HEK293 (cell line): ENCODE measurements at regions of chr5 and their contacts with region 1.

Region 1: GRCh38 chr5:140690941-140691924 is at the starts of genes HARS1 and HARS2:
- H3K4me3 ChIP-seq: peak within 1 kb of the TSS; percentile 72
- H3K27ac ChIP-seq: peak within 1 kb of the TSS; percentile 75
- H3K4me1 ChIP-seq: 0 out of 2 replicates have a peak, but pooled peaks cover 2% of the 10 kb centered on the region
- CTCF ChIP-seq: peak; percentile 52; the same call in 1 of the 2 replicates

Region 2: GRCh38 chr5:140401362-140402257 is 289.6 kb before region 1 on chr5 and contains the start of gene ANKHD1:
- CTCF ChIA-PET with region 1: no interaction called
- POLR2A ChIA-PET with region 1: interaction called, 13 read pairs
- H3K4me3 ChIP-seq: peak within 1 kb of the TSS; percentile 98
- H3K27ac ChIP-seq: peak within 1 kb of the TSS; percentile 91
- H3K4me1 ChIP-seq: peaks cover 8% of the 10 kb centered on the region; the same call in 1 of the 2 replicates
- CTCF ChIP-seq: peak; percentile 64; the same call in 1 of the 2 replicates

Region 3: DNA sequence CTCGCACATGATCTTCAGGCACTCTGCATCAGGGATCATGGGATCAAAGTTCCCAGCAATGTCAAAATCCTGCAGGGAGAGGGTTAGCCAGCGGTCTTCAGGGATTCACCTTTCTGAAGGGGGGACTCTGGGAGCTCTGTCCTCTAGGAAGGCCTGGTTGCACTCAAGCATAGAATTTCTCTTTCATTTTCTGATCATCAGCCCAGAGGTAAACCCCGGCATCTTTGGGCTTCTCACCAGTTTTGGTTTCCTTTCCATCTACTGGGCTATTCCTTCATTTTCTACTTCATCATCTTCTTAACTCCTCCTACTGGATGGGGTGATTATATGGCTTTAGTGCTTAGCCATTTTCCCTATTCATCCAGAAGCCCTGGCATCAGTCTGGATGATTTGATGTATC is 13.3 kb before region 1 on chr5:
- CTCF ChIA-PET with region 1: interaction called, 4 read pairs
- POLR2A ChIA-PET with region 1: interaction called, 19 read pairs
- H3K4me3 ChIP-seq: no peak overlapping the region
- H3K27ac ChIP-seq: no peak overlapping the region
- H3K4me1 ChIP-seq: no peaks in the 10 kb centered on the region
- CTCF ChIP-seq: no peak

Region 4: DNA sequence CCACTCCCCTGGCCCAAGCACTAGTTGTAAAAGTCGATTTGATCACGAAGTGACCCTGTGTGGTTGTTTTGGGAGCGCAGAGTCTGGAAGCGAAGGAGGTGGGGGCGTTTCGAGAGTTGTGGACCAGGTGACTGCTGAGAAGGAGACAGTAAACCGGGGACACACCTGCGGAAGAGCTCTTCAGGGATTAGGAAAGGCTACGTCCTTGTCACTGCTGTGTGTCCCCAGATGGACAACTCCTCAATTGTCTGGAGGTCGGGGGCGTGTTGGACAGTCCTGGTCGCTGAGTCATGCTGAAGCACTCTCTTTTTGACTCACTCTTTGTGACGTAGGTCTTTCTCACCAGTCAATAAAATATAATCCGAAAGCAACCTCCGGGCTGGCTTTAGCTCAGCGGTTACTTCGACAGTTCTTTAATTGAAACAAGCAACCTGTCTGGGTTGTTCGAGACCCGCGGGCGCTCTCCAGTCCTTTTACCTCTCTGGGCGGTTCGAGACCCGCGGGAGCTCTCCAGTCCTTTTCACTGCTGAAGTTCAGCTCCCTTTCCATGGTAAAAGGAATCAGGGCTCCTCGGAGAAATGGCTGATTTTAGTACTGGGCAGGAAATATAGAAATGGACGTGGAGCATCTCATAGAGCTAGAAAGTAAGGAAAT is 19.8 kb after region 1 on chr5:
- CTCF ChIA-PET with region 1: interaction called, 4 read pairs
- POLR2A ChIA-PET with region 1: interaction called, 22 read pairs
- H3K4me3 ChIP-seq: peak overlapping the region; percentile 56
- H3K27ac ChIP-seq: peak overlapping the region; percentile 50
- H3K4me1 ChIP-seq: no peaks in the 10 kb centered on the region
- CTCF ChIP-seq: no peak

Region 5: GRCh38 chr5:140718241-140718580 is 27.0 kb after region 1 on chr5:
- CTCF ChIA-PET with region 1: interaction called, 3 read pairs
- POLR2A ChIA-PET with region 1: interaction called, 10 read pairs
- H3K4me3 ChIP-seq: peak overlapping the region; percentile 45
- H3K27ac ChIP-seq: no peak overlapping the region; the same call in 1 of the 2 replicates
- H3K4me1 ChIP-seq: no peaks in the 10 kb centered on the region
- CTCF ChIP-seq: no peak

Region 6: DNA sequence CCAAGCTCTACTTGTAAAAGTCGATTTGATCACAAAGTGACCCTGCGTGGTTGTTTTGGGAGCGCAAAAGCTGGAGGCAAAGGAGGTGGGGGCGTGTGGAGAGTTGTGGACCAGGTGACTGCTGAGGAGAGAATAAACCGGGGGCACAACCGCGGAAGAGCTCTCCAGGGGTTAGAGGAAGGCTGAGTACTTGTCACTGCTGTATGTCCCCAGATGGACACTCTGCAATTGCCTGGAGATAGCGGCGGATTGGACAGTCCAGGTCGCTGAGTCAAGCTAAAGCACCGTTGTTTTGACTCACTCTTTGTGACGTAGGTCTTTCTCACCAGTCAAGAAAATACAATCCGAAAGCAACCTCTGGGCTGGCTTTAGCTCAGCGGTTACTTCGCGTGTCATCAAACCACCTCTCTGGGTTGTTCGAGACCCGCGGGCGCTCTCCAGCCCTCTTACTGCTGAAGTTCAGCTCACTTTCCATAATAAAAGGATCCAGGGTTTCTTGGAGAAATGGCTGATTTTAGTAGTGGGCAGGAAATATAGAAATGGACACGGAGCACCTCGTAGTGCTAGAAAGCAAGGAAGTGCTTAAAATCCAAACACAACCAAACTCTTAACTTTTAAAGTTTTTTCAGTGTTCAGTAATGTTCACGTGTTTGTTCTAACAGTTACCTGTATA is 34.7 kb after region 1 on chr5:
- CTCF ChIA-PET with region 1: no interaction called
- POLR2A ChIA-PET with region 1: interaction called, 11 read pairs
- H3K4me3 ChIP-seq: peak overlapping the region; percentile 42
- H3K27ac ChIP-seq: no peak overlapping the region
- H3K4me1 ChIP-seq: no peaks in the 10 kb centered on the region
- CTCF ChIP-seq: no peak

Region 7: DNA sequence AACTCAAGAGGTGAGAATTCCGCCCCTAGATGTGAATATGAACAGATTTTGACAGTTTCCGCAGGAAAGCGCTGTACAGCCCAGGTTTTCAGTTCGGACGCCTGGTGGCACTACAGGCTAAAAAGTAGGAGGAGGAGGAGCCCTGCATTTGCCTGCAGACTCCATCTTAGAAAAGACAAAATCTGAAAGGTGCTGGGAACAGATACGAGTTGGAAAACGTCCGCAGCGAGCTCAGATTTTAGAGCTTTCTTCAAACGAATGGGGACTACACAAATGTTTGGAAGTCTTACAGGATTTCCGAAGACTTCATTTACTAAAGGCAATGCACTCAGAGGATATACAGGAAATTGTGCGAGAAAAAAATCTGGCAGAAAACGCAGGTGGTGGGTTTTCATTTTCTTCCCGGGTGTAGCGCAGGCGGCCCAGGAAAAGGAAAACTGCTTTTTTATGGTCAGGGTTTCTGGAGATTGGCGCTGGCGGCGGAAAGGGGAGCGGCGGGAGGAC is 393.3 kb after region 1 on chr5:
- CTCF ChIA-PET with region 1: no interaction called
- POLR2A ChIA-PET with region 1: no interaction called
- H3K4me3 ChIP-seq: peak overlapping the region; percentile 40
- H3K27ac ChIP-seq: no peak overlapping the region
- H3K4me1 ChIP-seq: no peaks in the 10 kb centered on the region
- CTCF ChIP-seq: no peak